Calu3 (cell line): ENCODE measurements at regions of chr2 and their contacts with region 1.

Region 1: DNA sequence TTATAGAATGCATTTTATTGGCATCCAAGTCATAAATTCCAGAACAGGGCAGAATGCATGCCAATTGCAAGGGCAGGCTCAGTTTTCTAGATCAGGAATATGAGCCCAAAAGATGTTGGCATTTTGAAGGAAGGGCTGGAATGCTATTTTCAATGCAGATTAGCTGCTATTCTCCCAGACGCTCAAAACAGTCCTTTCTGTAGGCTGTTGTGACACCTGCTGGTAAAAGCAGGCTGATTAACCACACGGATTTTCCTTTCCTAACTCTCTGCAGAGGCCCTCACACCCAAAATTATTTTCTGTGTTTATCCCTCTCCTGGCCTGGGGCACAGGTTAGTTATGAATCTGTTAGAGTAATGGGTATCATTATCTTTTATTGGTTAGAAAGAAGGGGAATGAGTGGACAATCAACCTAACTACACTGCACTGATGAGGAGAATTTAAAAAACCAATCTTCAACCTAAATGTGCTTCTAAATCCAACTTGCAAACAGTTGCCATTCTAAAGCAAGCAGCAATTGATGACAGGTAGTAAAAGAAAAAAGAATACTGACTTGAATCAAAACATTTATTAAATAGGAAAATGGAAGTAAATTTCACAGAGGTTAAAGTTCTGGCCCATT is 94.0 kb downstream of the PLA2R1 start:
- DNase-seq: peak; percentile 36
- H3K4me3 Mint-ChIP-seq: no peak overlapping the region
- H3K27ac Mint-ChIP-seq: no peak overlapping the region
- H3K4me1 Mint-ChIP-seq: no peaks in the 10 kb centered on the region
- H3K27me3 Mint-ChIP-seq: no peaks in the 10 kb centered on the region
- CTCF ChIP-seq: peak; percentile 35

Region 2: DNA sequence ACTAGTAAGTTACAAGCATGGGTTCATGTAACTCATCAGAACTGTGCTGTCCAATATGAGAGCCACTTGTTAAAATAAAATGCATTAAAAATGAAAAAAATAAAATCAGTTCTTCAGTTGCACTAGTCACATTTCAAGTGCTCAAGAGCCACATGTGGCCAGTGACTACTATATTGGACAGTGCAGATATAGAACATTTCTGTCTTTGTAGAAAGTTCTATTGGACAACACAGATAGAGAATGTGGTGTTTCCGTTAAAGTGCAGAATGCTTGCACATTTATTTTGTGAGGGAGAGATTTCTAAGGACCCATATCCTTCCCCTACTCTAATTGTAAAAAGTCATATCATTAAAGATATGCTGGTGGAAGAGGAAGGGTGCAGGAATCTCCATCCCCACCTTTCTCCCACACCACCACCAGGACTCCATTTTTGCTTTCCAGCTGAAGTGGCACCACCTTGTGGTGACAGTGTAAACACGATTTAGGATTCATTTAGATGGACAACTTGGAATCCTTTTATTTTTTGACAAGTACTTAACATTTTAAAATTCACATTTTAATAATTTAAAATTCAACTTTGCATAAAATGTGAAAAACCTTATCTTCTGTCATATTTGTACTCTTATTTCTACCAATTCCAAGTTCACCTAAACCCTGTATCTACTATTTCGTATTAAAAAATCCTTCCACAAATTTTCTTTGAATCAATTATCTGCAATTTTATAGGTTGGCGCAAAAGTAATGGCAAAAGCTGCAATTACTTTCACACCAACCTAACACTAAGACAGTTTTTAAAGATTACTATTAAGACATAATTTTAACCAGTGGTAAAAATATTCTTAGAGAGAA is 161.0 kb before region 1 on chr2:
- CTCF ChIA-PET with region 1: no interaction called
- intact Hi-C with region 1: loop called (anchors 10 kb)
- DNase-seq: peak; percentile 54
- H3K4me3 Mint-ChIP-seq: no peak overlapping the region
- H3K27ac Mint-ChIP-seq: no peak overlapping the region
- H3K4me1 Mint-ChIP-seq: no peaks in the 10 kb centered on the region
- H3K27me3 Mint-ChIP-seq: no peaks in the 10 kb centered on the region
- CTCF ChIP-seq: peak; percentile 61